Left lung (tissue), 14 donors: ENCODE measurements at regions of chr17 and their contacts with region 1.

Region 1: GRCh38 chr17:50783193-50783660 is 15.9 kb upstream of the ANKRD40CL start:
- DNase-seq: peak; percentile 70 to 96 (median 86)
- ATAC-seq: peak; percentile 98
- H3K4me3 ChIP-seq: no peak overlapping the region
- H3K27ac ChIP-seq: no peak overlapping the region
- H3K4me1 ChIP-seq: no peaks in the 10 kb centered on the region
- H3K27me3 ChIP-seq: peaks cover 0 to 17% of the 10 kb centered on the region in 2 donors
- CTCF ChIP-seq: peak; percentile 97 to 98

Region 2: DNA sequence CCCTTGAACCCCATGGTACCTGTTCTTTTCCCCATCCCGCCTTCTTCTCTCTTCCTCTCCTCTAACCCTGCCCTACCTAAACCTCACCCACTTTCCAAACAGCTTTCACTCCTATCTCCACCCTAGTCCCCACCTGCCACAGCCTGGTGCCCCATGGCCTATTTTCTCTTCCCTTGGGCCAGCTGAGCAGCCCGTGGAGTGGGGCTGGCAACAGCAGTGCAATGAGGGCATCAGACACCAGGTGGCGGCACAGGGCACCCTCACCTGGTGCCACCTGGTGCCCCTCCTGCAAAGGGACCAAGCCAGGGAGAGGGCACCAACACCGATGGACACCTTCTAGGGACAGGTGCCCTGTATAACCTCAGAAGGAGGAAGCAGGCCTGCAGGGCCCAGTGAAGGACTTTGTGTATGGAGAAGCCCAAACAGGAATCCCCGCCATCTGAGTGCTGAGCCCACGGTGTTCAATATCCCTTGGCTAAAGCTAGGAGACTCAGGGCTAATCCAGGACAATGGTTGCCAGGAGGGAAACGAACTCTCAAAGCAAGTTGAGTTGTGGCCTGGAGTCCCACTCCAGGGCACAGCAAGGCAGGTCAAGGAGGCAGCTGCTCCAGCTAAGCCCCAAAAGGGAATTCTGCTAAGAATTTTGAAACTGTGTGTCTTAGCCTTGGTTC is 152.6 kb before region 1 on chr17:
- intact Hi-C with region 1: no loop called
- DNase-seq: peak in 2 of 4 donors; percentile 54 to 89
- ATAC-seq: peak; percentile 70
- H3K4me3 ChIP-seq: no peak overlapping the region
- H3K27ac ChIP-seq: no peak overlapping the region
- H3K4me1 ChIP-seq: peaks cover 13 to 22% of the 10 kb centered on the region in 2 donors
- H3K27me3 ChIP-seq: peaks cover 0 to 91% of the 10 kb centered on the region in 2 donors
- CTCF ChIP-seq: peak; percentile 54 to 83

Region 3: DNA sequence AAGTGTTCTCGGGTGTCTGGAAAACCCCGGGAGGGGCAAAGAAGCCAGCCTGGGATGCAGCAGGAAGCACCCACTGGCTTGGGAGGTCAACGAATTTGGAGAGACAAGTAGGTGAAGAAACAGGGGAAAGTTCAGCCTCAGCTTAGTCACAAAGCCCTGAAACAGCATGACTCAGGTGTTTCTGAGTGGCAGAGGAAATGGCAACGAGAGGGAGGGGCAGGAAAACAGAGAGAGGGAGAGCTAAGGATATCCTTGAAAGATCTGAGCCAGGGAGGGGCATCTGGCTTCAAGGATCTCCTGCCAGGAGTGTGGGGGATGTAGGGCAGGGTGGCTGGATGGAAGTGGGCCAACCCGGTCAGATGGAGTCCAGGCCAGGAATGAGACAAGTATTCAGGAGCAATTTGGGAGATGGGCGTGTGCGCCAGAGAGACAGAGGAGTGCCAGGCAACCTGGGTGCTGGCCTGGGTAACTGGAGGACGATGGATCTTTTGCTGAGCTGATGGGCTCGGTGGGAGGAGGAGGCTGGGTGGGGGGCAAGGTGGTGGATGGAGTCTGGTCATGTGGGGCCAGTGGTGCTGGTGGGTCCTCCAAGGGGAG is 121.3 kb before region 1 on chr17:
- intact Hi-C with region 1: no loop called
- DNase-seq: peak in 3 of 4 donors; percentile 45 to 79 (median 71)
- ATAC-seq: peak; percentile 85
- H3K4me3 ChIP-seq: no peak overlapping the region
- H3K27ac ChIP-seq: peak overlapping the region; percentile 57 to 75
- H3K4me1 ChIP-seq: peaks cover 21 to 31% of the 10 kb centered on the region in 2 donors
- H3K27me3 ChIP-seq: no peaks in the 10 kb centered on the region
- CTCF ChIP-seq: no peak

Region 4: GRCh38 chr17:50707289-50708049 is 75.8 kb before region 1 on chr17 and contains the start of gene ANKRD40:
- intact Hi-C with region 1: no loop called
- DNase-seq: peak; percentile 86 to 95 (median 94)
- ATAC-seq: peak; percentile 89
- H3K4me3 ChIP-seq: peak within 1 kb of the TSS; percentile 78 to 80
- H3K27ac ChIP-seq: peak within 1 kb of the TSS; percentile 96 to 98
- H3K4me1 ChIP-seq: peaks cover 11 to 66% of the 10 kb centered on the region in 2 donors
- H3K27me3 ChIP-seq: no peaks in the 10 kb centered on the region
- CTCF ChIP-seq: no peak
- polyA plus RNA-seq, gene ANKRD40: 44.5 to 52.0 (median 47.1) TPM

Region 5: DNA sequence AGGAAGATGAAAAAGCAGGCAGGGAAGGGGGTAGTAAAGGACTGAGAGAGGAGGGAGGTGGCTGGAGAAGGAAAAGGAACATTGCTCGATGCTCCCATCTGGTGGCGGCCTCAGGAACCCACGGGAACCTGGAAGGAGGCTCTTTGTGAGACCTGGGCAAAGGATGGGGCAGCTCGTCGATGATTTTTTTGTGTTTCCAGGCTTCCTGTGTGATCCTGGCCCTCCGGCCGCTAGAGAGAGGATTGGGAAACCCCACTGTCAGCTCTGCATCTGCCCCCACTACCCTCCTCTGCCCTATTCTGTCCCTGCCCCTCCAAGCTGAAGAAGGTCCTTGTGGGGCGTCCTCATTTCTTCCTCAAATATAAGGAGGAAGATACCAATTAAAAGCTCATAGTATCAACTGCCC is 58.7 kb after region 1 on chr17:
- intact Hi-C with region 1: loop called in 1 of 2 experiments (anchors 5 kb)
- DNase-seq: peak; percentile 59 to 83 (median 73)
- ATAC-seq: peak; percentile 89
- H3K4me3 ChIP-seq: no peak overlapping the region
- H3K27ac ChIP-seq: no peak overlapping the region
- H3K4me1 ChIP-seq: no peaks in the 10 kb centered on the region
- H3K27me3 ChIP-seq: no peaks in the 10 kb centered on the region
- CTCF ChIP-seq: peak; percentile 59 to 81

Region 6: GRCh38 chr17:51035431-51035830 is 252.2 kb after region 1 on chr17:
- intact Hi-C with region 1: no loop called
- DNase-seq: no peak
- ATAC-seq: peak; percentile 82
- H3K4me3 ChIP-seq: no peak overlapping the region
- H3K27ac ChIP-seq: peak overlapping the region in 1 of 2 donors; percentile 60
- H3K4me1 ChIP-seq: peaks cover 12 to 14% of the 10 kb centered on the region in 2 donors
- H3K27me3 ChIP-seq: no peaks in the 10 kb centered on the region
- CTCF ChIP-seq: no peak